Motor neuron (in vitro differentiated cells): ENCODE measurements at regions of chr6 and their contacts with region 1.

Region 1: GRCh38 chr6:153032255-153032882 is 29.9 kb upstream of the MTRF1L start:
- ATAC-seq: peak in 2 of 8 experiments; percentile 21 to 32
- H3K4me3 ChIP-seq: no peak overlapping the region
- H3K27ac ChIP-seq: no peak overlapping the region
- H3K4me1 ChIP-seq: no peaks in the 10 kb centered on the region

Region 2: DNA sequence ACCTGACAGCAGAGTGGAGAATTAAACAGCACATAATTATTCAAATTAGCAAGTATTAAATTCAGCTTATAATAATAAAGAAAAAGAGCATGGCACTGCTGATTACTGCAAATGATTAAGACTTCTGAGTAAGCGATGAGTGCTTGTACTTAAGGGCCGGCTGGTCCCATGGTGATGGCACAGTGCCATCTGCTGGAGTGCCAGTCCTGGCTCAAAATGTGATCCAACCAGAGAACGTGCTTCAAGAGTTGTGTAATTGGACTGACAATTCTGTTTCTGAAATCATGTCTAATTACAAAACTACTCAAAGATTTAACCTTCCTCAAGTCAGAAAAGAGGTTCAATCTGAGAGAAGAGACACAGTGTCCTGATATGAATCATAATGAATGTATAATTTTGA is 280.3 kb after region 1 on chr6:
- in situ Hi-C with region 1: loop called in 1 of 9 experiments (anchors 25 kb)
- ATAC-seq: peak in 4 of 8 experiments; percentile 32 to 72 (median 36)
- H3K4me3 ChIP-seq: no peak overlapping the region
- H3K27ac ChIP-seq: no peak overlapping the region
- H3K4me1 ChIP-seq: no peaks in the 10 kb centered on the region